Vagina (tissue), 2 donors: ENCODE measurements at regions of chr5 and their contacts with region 1.

Region 1: GRCh38 chr5:157072508-157072907 is 13.6 kb upstream of the HAVCR1 start:
- DNase-seq: no peak
- H3K4me3 ChIP-seq: no peak overlapping the region
- H3K27ac ChIP-seq: no peak overlapping the region
- H3K4me1 ChIP-seq: no peaks in the 10 kb centered on the region
- H3K27me3 ChIP-seq: no peaks in the 10 kb centered on the region
- CTCF ChIP-seq: no peak
- POLR2A ChIP-seq: no peak

Region 2: DNA sequence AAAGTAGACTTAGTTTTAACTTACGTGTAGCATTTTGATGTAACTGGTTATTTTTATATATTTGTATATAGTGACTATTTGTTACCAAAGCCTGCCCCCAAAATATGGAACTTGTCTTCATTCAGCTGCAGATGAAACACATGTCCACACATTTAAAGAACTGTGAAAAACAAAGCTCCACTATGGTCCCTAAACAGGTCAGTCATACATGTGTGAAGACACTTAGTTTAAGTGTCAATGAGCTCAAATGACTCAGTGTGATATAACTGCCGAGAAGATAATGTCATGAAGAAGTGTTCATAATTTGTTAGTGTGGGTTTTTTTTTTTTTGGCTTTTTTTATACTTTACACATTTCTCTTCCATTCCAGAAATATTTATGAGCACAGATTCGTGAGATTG is 41.8 kb before region 1 on chr5:
- intact Hi-C with region 1: no loop called
- DNase-seq: no peak
- H3K4me3 ChIP-seq: no peak overlapping the region
- H3K27ac ChIP-seq: no peak overlapping the region
- H3K4me1 ChIP-seq: no peaks in the 10 kb centered on the region
- H3K27me3 ChIP-seq: no peaks in the 10 kb centered on the region
- CTCF ChIP-seq: no peak
- POLR2A ChIP-seq: no peak

Region 3: DNA sequence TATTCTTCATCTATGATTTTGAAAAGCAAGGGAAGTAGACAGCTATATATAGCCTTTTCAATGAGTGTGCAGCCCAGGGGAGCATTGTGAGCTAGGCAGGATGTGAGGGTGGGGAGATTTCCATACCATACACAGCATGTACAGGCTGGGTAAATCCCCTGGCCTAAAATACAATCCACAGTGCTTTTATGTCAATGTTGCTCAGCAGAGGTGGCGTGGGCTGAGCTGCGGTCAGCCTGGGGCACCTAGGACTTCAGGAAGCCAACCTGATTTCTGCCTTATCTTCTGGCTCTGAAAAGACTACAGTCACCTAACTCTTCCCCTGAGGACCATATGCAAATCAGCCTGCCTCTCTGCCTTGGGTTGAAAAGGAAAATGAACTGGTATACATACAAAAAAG is 99.9 kb after region 1 on chr5:
- intact Hi-C with region 1: no loop called
- DNase-seq: no peak
- H3K4me3 ChIP-seq: no peak overlapping the region
- H3K27ac ChIP-seq: no peak overlapping the region
- H3K4me1 ChIP-seq: no peaks in the 10 kb centered on the region
- H3K27me3 ChIP-seq: no peaks in the 10 kb centered on the region
- CTCF ChIP-seq: no peak
- POLR2A ChIP-seq: no peak

Region 4: DNA sequence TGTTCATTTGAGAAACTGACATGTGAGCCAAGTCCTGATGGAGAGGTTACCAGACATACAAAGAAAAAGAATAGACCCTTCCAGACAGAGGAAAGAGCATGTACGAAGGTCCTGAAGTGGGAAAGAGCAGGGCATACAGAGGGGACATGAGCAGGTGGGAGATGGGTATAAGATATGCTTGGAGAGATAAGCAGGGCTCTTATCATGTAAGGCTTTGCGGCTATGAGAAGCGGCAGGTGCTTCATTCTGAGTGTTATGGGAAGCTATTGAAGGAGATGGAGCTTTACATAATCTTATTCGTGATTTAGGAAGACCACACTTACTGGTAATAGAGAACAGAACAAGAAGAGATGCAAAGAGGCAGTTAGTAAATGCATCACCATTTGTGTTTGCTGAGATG is 1610.1 kb after region 1 on chr5:
- intact Hi-C with region 1: loop called (anchors 5 kb)
- DNase-seq: no peak
- H3K4me3 ChIP-seq: no peak overlapping the region
- H3K27ac ChIP-seq: no peak overlapping the region
- H3K4me1 ChIP-seq: no peaks in the 10 kb centered on the region
- H3K27me3 ChIP-seq: no peaks in the 10 kb centered on the region
- CTCF ChIP-seq: no peak
- POLR2A ChIP-seq: no peak